ENCODE measurements at regions of chr2 and their contacts with region 1.

Region 1: DNA sequence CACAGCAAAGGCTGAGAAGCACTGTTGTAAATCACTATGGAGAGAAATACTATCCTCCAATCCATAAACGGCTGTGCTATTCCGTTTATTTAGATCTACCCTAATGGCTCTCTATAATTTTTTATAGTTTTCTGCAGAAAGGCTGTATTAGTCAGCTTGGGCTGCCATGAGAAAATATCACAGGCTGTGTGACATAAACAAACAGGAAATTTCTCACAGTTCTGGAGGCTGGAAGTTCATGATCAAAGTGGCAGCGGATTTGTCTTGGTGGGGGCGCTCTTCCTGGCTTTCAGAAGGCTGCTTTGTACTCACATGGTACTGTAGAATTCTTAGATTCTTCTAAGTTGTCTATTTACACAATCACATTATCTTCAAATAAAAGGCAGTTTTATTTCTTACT is 44.1 kb downstream of the C1D start:
- DNase-seq: no peak
- H3K4me3 ChIP-seq: no peak overlapping the region
- H3K27ac ChIP-seq: no peak overlapping the region
- H3K4me1 ChIP-seq: no peaks in the 10 kb centered on the region
- H3K27me3 ChIP-seq: no peaks in the 10 kb centered on the region
- CTCF ChIP-seq: no peak

Region 2: GRCh38 chr2:68044099-68044498 is 25.4 kb after region 1 on chr2:
- CTCF ChIA-PET with region 1: no interaction called
- POLR2A ChIA-PET with region 1: no interaction called
- intact Hi-C with region 1: loop called (anchors 1 kb)
- DNase-seq: no peak
- H3K4me3 ChIP-seq: no peak overlapping the region
- H3K27ac ChIP-seq: no peak overlapping the region
- H3K4me1 ChIP-seq: no peaks in the 10 kb centered on the region
- H3K27me3 ChIP-seq: no peaks in the 10 kb centered on the region
- CTCF ChIP-seq: no peak

Measured in PC-9 (cell line).